ENCODE measurements at regions of chr10 and their contacts with region 1.

Region 1: DNA sequence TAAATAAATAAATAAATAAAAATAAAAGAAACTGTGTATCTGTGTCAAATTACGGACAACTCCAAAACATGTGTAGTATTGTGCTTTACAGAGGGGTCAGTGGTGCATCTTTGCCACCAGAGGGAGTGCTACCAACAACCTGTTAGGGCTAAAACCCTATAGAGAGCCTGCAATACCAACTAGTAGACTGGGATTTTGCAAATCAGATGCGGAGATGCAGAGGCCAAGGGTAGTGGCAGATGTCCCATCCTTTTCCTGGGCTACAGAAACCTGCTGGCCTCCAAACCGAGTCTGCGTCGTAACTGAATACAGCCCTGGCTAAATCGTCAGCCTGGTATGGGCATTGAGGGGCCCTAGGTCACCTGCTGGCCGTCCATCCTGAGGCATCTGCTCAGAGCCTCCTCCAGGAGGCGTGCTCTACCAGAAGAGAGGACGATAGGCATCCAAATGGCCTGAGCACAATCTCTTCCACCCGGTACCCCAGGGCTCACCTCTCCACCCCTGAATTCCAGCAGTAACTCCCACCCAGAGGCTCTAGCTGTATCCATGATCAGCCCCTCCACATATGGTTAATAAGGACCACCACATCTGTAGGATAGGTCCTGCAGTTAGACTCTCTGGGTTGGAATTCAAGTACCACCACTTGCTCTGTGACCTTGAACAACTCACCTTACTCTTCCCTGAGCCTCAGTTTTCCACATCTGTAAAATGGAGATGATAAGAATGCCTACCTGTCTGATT is 6.2 kb upstream of the RRP12 start:
- DNase-seq: peak; percentile 79
- H3K4me3 Mint-ChIP-seq: no peak overlapping the region
- H3K27ac Mint-ChIP-seq: peak overlapping the region; percentile 70
- H3K4me1 Mint-ChIP-seq: peaks cover 13% of the 10 kb centered on the region
- H3K27me3 Mint-ChIP-seq: no peaks in the 10 kb centered on the region

Region 2: DNA sequence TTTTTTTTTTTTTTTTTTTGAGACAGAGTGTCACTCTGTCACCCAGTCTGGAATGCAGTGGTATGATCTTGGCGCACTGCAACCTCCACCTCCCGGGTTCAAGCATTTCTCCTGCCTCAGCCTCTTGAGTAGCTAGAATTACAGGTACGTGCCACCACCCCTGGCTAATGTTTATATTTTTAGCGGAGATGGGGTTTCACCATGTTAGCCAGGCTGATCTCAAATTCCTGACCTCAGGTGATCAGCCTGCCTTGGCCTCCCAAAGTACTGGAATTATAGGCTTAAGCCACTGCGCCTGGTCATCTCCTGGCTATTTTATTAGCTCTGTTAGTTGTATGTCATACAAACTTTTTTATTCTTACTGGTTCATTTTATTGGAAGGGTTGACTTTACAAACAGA is 472.2 kb before region 1 on chr10:
- CTCF ChIA-PET with region 1: no interaction called
- POLR2A ChIA-PET with region 1: no interaction called
- intact Hi-C with region 1: no loop called
- DNase-seq: no peak
- H3K4me3 Mint-ChIP-seq: no peak overlapping the region
- H3K27ac Mint-ChIP-seq: no peak overlapping the region
- H3K4me1 Mint-ChIP-seq: peaks cover 1% of the 10 kb centered on the region
- H3K27me3 Mint-ChIP-seq: no peaks in the 10 kb centered on the region

Region 3: GRCh38 chr10:97393034-97393573 is 14.3 kb before region 1 on chr10:
- CTCF ChIA-PET with region 1: no interaction called
- POLR2A ChIA-PET with region 1: no interaction called
- intact Hi-C with region 1: no loop called
- DNase-seq: no peak
- H3K4me3 Mint-ChIP-seq: no peak overlapping the region
- H3K27ac Mint-ChIP-seq: no peak overlapping the region
- H3K4me1 Mint-ChIP-seq: peaks cover 6% of the 10 kb centered on the region
- H3K27me3 Mint-ChIP-seq: no peaks in the 10 kb centered on the region

Region 4: GRCh38 chr10:97425964-97426775 is 18.8 kb after region 1 on chr10 and contains the start of gene PGAM1:
- CTCF ChIA-PET with region 1: interaction called, 194 read pairs
- POLR2A ChIA-PET with region 1: interaction called, 326 read pairs
- intact Hi-C with region 1: loop called (anchors 1 kb)
- DNase-seq: peak; percentile 97
- H3K4me3 Mint-ChIP-seq: peak within 1 kb of the TSS; percentile 93
- H3K27ac Mint-ChIP-seq: peak within 1 kb of the TSS; percentile 98
- H3K4me1 Mint-ChIP-seq: peaks cover 47% of the 10 kb centered on the region
- H3K27me3 Mint-ChIP-seq: peaks cover 2% of the 10 kb centered on the region
- total RNA-seq, gene PGAM1: 1,430 to 1,457 TPM

Region 5: GRCh38 chr10:97445722-97446639 is 38.6 kb after region 1 on chr10 and contains the starts of genes EXOSC1 and ZDHHC16:
- CTCF ChIA-PET with region 1: interaction called, 57 read pairs
- POLR2A ChIA-PET with region 1: interaction called, 70 read pairs
- intact Hi-C with region 1: loop called (anchors 1 kb)
- DNase-seq: peak; percentile 96
- H3K4me3 Mint-ChIP-seq: peak within 1 kb of the TSS; percentile 99
- H3K27ac Mint-ChIP-seq: peak within 1 kb of the TSS; percentile 58
- H3K4me1 Mint-ChIP-seq: peaks cover 57% of the 10 kb centered on the region
- H3K27me3 Mint-ChIP-seq: no peaks in the 10 kb centered on the region
- total RNA-seq, gene EXOSC1: 69.0 to 75.1 TPM
- total RNA-seq, gene ZDHHC16: 42.5 to 43.6 TPM

Region 6: DNA sequence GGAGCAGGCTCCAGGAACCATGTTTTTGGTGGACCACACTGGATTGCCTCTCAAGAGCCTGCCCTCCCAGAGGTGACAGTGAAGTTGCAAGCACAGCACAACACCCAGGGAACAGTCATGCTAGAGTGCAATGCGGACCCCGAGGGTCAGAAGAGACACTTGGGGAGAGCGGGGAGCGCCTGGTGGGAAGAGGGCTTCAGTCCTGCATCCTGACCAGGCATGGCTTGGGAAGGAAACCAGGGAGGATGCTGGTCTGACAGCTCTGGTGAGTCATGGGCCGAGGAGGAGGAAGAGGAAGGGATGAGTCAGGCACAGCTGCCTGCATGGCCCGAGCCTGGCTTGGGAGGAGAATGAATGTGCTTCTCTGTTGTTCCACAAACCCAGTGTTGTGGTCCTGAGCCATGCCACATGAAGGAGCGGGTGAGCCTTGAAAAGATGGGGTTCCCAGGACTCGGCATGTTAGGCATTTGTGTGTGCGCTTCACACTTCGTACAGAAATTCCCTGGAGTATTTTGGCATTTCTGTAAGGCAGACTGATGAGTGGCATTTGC is 135.7 kb after region 1 on chr10:
- CTCF ChIA-PET with region 1: interaction called, 4 read pairs
- POLR2A ChIA-PET with region 1: no interaction called
- intact Hi-C with region 1: loop called (anchors 2 kb)
- DNase-seq: peak; percentile 86
- H3K4me3 Mint-ChIP-seq: no peak overlapping the region
- H3K27ac Mint-ChIP-seq: peak overlapping the region; percentile 38
- H3K4me1 Mint-ChIP-seq: peaks cover 22% of the 10 kb centered on the region
- H3K27me3 Mint-ChIP-seq: peaks cover 2% of the 10 kb centered on the region

Region 7: DNA sequence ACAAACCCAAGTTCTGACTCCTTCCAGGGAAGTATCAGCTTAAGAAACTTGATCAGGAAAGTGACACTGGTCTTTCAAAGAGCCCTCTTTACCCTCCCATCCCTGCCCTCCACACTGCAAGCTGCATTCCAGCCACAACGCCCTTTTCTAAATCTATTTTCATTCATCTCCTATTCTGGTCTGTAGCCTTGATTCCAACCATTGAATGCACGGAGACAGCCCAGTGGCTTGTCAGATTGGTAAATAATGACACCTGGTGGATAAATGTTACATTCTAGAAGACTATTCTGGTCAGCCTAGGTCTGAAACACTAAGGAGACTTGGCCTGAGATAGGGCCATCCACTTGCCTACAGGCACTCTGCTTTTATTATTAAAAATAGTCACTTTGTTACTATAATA is 205.0 kb after region 1 on chr10:
- CTCF ChIA-PET with region 1: no interaction called
- POLR2A ChIA-PET with region 1: no interaction called
- intact Hi-C with region 1: loop called (anchors 5 kb)
- DNase-seq: no peak
- H3K4me3 Mint-ChIP-seq: no peak overlapping the region
- H3K27ac Mint-ChIP-seq: no peak overlapping the region
- H3K4me1 Mint-ChIP-seq: no peaks in the 10 kb centered on the region
- H3K27me3 Mint-ChIP-seq: no peaks in the 10 kb centered on the region

Measured in activated CD4-positive, alpha-beta memory T cell treated with anti-CD3 and anti-CD28 coated beads for 36 hours (primary cell).